Left lung (tissue), 14 donors: ENCODE measurements at regions of chr21 and their contacts with region 1.

Region 1: DNA sequence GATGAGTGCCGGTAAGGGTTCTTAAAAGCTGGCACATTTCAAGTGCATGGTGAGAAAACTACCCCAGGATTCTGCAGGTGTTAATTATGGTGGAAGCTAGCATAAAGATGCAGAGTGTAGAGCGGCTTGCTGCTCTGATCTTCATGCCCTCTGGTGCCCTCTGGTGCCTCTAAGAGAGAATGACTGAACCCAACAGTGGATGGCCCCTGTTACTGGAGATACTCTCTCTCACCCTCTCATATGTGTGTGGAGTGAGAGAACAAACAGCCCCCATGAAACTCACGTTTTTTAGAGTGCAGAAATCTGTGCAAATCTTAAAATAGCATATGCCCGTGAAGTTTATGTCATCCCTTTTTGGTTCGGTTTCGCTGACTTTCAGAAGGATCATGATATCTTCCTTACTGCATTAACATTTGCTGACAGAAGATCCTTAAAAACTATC is 90.0 kb downstream of the GRIK1 start:
- DNase-seq: peak in 2 of 4 donors; percentile 42 to 66
- ATAC-seq: peak; percentile 99
- H3K4me3 ChIP-seq: no peak overlapping the region
- H3K27ac ChIP-seq: no peak overlapping the region
- H3K4me1 ChIP-seq: no peaks in the 10 kb centered on the region
- H3K27me3 ChIP-seq: no peaks in the 10 kb centered on the region
- CTCF ChIP-seq: peak; percentile 71

Region 2: GRCh38 chr21:29477941-29478340 is 371.8 kb before region 1 on chr21:
- intact Hi-C with region 1: loop called in 1 of 2 experiments (anchors 10 kb)
- DNase-seq: no peak
- ATAC-seq: peak; percentile 35
- H3K4me3 ChIP-seq: no peak overlapping the region
- H3K27ac ChIP-seq: no peak overlapping the region
- H3K4me1 ChIP-seq: peaks cover 0 to 6% of the 10 kb centered on the region in 2 donors
- H3K27me3 ChIP-seq: no peaks in the 10 kb centered on the region
- CTCF ChIP-seq: no peak